ENCODE measurements at regions of chr15 and their contacts with region 1.

Region 1: GRCh38 chr15:62742409-62743171 is 300.0 kb upstream of the TPM1 start:
- DNase-seq: peak; percentile 64
- H3K4me3 ChIP-seq: no peak overlapping the region
- H3K27ac ChIP-seq: no peak overlapping the region
- H3K4me1 ChIP-seq: no peaks in the 10 kb centered on the region
- H3K27me3 ChIP-seq: no peaks in the 10 kb centered on the region
- CTCF ChIP-seq: peak; percentile 83 to 89
- POLR2A ChIP-seq: no peak

Region 2: GRCh38 chr15:62389885-62390790 is 352.5 kb before region 1 on chr15:
- CTCF ChIA-PET with region 1: interaction called, 5 read pairs
- POLR2A ChIA-PET with region 1: no interaction called
- dilution Hi-C with region 1: no loop called
- intact Hi-C with region 1: loop called (anchors 2 kb)
- DNase-seq: peak; percentile 74
- H3K4me3 ChIP-seq: peak within 1 kb of the TSS; percentile 17 to 96 (median 53)
- H3K27ac ChIP-seq: peak within 1 kb of the TSS; percentile 76
- H3K4me1 ChIP-seq: peaks cover 16% of the 10 kb centered on the region
- H3K27me3 ChIP-seq: peaks cover 12 to 14% of the 10 kb centered on the region in 2 experiments
- CTCF ChIP-seq: no peak
- POLR2A ChIP-seq: peak; percentile 90

Region 3: GRCh38 chr15:62726461-62726860 is 16.1 kb before region 1 on chr15:
- CTCF ChIA-PET with region 1: interaction called, 23 read pairs
- POLR2A ChIA-PET with region 1: no interaction called
- dilution Hi-C with region 1: no loop called
- intact Hi-C with region 1: no loop called
- DNase-seq: no peak
- H3K4me3 ChIP-seq: no peak overlapping the region
- H3K27ac ChIP-seq: no peak overlapping the region
- H3K4me1 ChIP-seq: no peaks in the 10 kb centered on the region
- H3K27me3 ChIP-seq: peaks cover 4 to 9% of the 10 kb centered on the region in 2 experiments
- CTCF ChIP-seq: no peak
- POLR2A ChIP-seq: no peak

Region 4: GRCh38 chr15:62752657-62753517 is 10.3 kb after region 1 on chr15:
- CTCF ChIA-PET with region 1: interaction called, 19 read pairs
- POLR2A ChIA-PET with region 1: no interaction called
- dilution Hi-C with region 1: no loop called
- intact Hi-C with region 1: no loop called
- DNase-seq: no peak
- H3K4me3 ChIP-seq: no peak overlapping the region
- H3K27ac ChIP-seq: no peak overlapping the region
- H3K4me1 ChIP-seq: no peaks in the 10 kb centered on the region
- H3K27me3 ChIP-seq: peaks cover 0 to 2% of the 10 kb centered on the region in 2 experiments
- CTCF ChIP-seq: no peak
- POLR2A ChIP-seq: no peak

Region 5: GRCh38 chr15:62782039-62782791 is 39.6 kb after region 1 on chr15:
- CTCF ChIA-PET with region 1: interaction called, 11 read pairs
- POLR2A ChIA-PET with region 1: no interaction called
- dilution Hi-C with region 1: no loop called
- intact Hi-C with region 1: no loop called
- DNase-seq: peak; percentile 90
- H3K4me3 ChIP-seq: no peak overlapping the region
- H3K27ac ChIP-seq: no peak overlapping the region
- H3K4me1 ChIP-seq: peaks cover 8% of the 10 kb centered on the region
- H3K27me3 ChIP-seq: no peaks in the 10 kb centered on the region
- CTCF ChIP-seq: peak; percentile 73 to 77
- POLR2A ChIP-seq: no peak

Region 6: GRCh38 chr15:62940755-62941361 is 198.3 kb after region 1 on chr15:
- CTCF ChIA-PET with region 1: no interaction called
- POLR2A ChIA-PET with region 1: no interaction called
- dilution Hi-C with region 1: no loop called
- intact Hi-C with region 1: no loop called
- DNase-seq: peak; percentile 25
- H3K4me3 ChIP-seq: no peak overlapping the region
- H3K27ac ChIP-seq: no peak overlapping the region
- H3K4me1 ChIP-seq: no peaks in the 10 kb centered on the region
- H3K27me3 ChIP-seq: no peaks in the 10 kb centered on the region
- CTCF ChIP-seq: no peak
- POLR2A ChIP-seq: no peak

Measured in endothelial cell of umbilical vein (primary cell).